HEK293 (cell line): ENCODE measurements at regions of chr2 and their contacts with region 1.

Region 1: GRCh38 chr2:70258532-70258874 is 566 bp downstream of the PCYOX1 start:
- H3K4me3 ChIP-seq: peak overlapping the region; percentile 85
- H3K27ac ChIP-seq: peak overlapping the region; percentile 75; the same call in 1 of the 2 replicates
- H3K4me1 ChIP-seq: 0 out of 2 replicates have a peak, but pooled peaks cover 10% of the 10 kb centered on the region
- CTCF ChIP-seq: no peak

Region 2: DNA sequence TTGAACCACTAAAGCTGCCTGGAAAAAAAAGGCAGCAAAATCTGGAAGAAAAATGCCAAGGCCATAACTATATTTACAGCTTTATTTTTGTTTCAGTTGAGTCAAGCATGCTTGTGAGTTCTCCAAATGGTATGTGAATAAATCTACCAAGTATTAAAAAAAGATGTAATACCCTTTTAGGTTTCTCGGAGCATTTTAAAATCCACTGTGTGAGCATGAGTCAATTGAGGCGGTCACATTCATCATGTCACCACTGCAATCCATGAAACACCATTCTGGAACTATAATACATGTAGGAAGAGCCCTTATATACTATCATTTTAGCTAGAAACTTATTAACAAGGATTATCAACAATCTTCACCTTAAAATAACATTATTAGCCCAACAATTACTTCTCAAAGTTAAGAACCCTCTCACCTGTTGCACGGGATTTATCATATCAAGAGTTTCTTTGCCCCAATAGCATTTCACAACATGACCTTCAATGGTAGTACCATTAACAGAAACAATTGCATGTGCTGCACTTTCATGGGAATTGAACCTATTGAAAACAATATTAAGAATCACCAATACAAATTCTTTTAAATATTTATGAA is 43.5 kb before region 1 on chr2:
- CTCF ChIA-PET with region 1: no interaction called
- POLR2A ChIA-PET with region 1: no interaction called
- H3K4me3 ChIP-seq: no peak overlapping the region
- H3K27ac ChIP-seq: no peak overlapping the region
- H3K4me1 ChIP-seq: peaks cover 17% of the 10 kb centered on the region
- CTCF ChIP-seq: no peak

Region 3: DNA sequence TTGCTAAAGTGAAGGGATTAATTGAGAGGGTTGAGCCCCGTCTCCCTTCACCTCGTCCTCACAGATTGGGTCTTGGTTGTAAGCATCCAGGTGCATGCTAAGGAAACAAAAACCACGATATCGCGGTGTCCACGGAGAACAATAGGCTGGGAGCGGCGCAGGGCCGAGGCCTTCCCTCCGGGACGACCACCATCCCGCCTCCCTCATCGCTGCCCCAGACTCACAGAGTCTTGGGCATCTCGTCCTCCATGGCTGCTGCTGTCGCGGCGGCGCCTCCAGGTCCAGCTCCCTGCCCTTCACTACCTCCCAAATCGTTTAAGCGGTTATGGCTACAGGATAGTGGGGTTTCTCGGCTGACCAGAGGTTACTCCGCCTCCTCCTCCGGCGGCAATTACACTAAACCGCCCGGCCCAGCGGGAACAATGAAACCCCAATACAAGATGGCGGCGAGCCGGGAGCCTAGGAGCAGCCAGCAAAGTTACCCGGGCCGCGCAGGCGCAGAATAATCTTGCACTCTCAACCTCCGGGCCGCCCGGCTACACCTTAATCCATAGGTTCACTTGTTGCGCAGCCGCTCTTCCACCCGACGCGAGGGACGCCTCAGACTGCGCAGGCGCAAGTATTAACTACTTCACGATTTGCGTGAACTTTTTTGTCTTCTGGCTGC is 10.2 kb before region 1 on chr2 and contains the start of gene TIA1:
- CTCF ChIA-PET with region 1: no interaction called
- POLR2A ChIA-PET with region 1: interaction called, 47 read pairs
- H3K4me3 ChIP-seq: peak within 1 kb of the TSS; percentile 89
- H3K27ac ChIP-seq: peak within 1 kb of the TSS; percentile 98
- H3K4me1 ChIP-seq: no peaks in the 10 kb centered on the region; the same call in 1 of the 2 replicates
- CTCF ChIP-seq: no peak; the same call in 1 of the 2 replicates